ENCODE measurements at regions of chr2 and their contacts with region 1.

Region 1: GRCh38 chr2:113138428-113139322 is 11.3 kb downstream of the IL1RN start:
- H3K4me3 ChIP-seq: no peak overlapping the region
- H3K27ac ChIP-seq: no peak overlapping the region
- H3K4me1 ChIP-seq: no peaks in the 10 kb centered on the region
- CTCF ChIP-seq: peak; percentile 50

Region 2: GRCh38 chr2:112821142-112821541 is 317.5 kb before region 1 on chr2:
- CTCF ChIA-PET with region 1: no interaction called
- POLR2A ChIA-PET with region 1: no interaction called
- H3K4me3 ChIP-seq: no peak overlapping the region
- H3K27ac ChIP-seq: no peak overlapping the region
- H3K4me1 ChIP-seq: no peaks in the 10 kb centered on the region; the same call in 1 of the 2 replicates
- CTCF ChIP-seq: no peak

Region 3: DNA sequence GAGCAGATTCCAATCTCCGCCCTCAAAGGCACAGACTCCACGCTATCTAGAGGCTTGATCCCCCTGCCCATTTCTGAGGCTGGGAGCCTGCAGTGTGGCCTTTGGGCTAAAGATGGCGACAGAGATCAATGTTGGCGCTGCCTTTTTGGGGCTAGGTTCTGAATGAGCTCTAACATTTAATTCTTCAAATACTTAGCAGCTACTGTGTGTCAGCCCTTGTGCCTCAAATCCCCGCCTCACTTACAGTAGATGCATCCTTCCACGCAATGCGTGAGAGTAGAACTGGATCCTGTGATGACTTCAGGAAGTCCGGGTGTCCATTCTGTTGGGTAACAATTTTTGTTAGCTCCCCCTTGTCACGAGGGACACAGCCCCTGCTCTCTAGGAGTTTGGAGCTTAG is 58.5 kb before region 1 on chr2:
- CTCF ChIA-PET with region 1: interaction called, 25 read pairs
- POLR2A ChIA-PET with region 1: no interaction called
- H3K4me3 ChIP-seq: no peak overlapping the region
- H3K27ac ChIP-seq: no peak overlapping the region
- H3K4me1 ChIP-seq: no peaks in the 10 kb centered on the region
- CTCF ChIP-seq: no peak

Region 4: DNA sequence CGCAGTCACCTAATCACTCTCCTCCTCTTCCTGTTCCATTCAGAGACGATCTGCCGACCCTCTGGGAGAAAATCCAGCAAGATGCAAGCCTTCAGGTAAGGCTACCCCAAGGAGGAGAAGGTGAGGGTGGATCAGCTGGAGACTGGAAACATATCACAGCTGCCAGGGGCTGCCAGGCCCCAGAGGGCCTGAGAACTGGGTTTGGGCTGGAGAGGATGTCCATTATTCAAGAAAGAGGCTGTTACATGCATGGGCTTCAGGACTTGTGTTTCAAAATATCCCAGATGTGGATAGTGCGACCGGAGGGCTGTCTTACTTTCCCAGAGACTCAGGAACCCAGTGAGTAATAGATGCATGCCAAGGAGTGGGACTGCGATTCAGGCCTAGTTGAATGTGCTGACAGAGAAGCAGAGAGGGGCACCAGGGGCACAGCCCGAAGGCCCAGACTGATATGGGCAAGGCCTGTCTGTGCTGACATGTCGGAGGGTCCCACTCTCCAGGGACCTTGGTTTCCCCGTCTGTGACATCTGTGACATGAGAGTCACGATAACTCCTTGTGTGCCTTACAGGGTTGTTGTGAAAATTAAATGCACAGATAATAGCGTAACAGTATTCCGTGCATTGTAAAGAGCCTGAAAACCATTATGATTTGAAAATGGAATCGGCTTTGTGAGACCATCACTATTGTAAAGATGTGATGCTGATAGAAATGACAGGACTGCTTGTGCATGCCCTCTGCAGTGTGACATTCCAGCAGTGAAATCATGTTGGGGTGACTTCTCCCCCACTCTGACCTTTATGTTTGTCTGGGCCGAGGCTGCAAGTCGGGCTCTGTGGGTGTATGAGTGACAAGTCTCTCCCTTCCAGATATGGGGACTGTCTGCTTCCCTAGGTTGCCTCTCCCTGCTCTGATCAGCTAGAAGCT is 10.8 kb before region 1 on chr2:
- CTCF ChIA-PET with region 1: interaction called, 66 read pairs
- POLR2A ChIA-PET with region 1: no interaction called
- H3K4me3 ChIP-seq: no peak overlapping the region
- H3K27ac ChIP-seq: no peak overlapping the region
- H3K4me1 ChIP-seq: no peaks in the 10 kb centered on the region
- CTCF ChIP-seq: no peak

Region 5: DNA sequence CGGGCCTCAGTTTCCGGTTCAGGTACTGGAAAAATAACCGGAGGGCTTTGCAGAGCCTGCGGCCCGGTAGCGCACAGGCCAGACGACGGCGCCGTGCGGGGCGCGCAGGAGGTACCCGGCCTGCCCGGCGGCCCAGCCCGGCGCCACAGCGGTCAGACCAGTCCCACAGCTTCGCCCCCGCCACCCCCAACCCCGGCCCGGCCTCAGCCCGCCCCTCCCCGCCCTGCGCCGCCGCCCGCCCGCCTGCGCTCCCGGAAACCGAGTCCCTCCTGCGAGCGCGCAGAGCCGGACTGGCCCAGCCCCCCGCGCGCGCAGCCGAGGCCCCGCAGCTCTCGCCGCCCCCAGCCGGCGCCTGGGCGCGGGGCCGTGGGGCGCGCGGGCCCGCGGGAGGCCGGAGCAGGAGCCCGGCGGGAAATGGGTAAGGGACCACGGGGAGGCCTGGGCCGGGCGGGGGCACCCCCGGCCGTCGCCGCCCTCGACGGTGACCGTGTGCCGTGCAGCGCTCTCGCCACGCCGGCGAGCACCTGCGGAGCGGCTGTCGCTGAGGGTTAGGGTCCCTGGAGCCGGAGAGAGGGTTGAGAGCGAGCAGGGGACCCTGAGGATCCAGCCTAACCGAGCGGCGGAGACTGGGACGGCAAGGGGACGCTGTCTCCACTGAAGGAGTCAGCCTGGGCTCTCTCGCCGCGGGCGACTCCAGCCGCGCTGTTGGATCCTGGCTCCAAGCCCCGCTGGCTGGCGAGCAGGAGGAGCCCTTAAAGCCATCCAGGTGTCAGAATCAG is 18.6 kb after region 1 on chr2:
- CTCF ChIA-PET with region 1: interaction called, 19 read pairs
- POLR2A ChIA-PET with region 1: no interaction called
- H3K4me3 ChIP-seq: peak overlapping the region; percentile 20
- H3K27ac ChIP-seq: peak overlapping the region; percentile 69; the same call in 1 of the 2 replicates
- H3K4me1 ChIP-seq: no peaks in the 10 kb centered on the region; the same call in 1 of the 2 replicates
- CTCF ChIP-seq: peak; percentile 22; the same call in 1 of the 2 replicates

Region 6: GRCh38 chr2:113192438-113193100 is 53.9 kb after region 1 on chr2:
- CTCF ChIA-PET with region 1: interaction called, 177 read pairs
- POLR2A ChIA-PET with region 1: no interaction called
- H3K4me3 ChIP-seq: no peak overlapping the region
- H3K27ac ChIP-seq: no peak overlapping the region
- H3K4me1 ChIP-seq: no peaks in the 10 kb centered on the region
- CTCF ChIP-seq: peak; percentile 56

Region 7: GRCh38 chr2:113248997-113249770 is 110.5 kb after region 1 on chr2:
- CTCF ChIA-PET with region 1: interaction called, 13 read pairs
- POLR2A ChIA-PET with region 1: no interaction called
- H3K4me3 ChIP-seq: no peak overlapping the region
- H3K27ac ChIP-seq: no peak overlapping the region
- H3K4me1 ChIP-seq: no peaks in the 10 kb centered on the region
- CTCF ChIP-seq: peak; percentile 65

Region 8: DNA sequence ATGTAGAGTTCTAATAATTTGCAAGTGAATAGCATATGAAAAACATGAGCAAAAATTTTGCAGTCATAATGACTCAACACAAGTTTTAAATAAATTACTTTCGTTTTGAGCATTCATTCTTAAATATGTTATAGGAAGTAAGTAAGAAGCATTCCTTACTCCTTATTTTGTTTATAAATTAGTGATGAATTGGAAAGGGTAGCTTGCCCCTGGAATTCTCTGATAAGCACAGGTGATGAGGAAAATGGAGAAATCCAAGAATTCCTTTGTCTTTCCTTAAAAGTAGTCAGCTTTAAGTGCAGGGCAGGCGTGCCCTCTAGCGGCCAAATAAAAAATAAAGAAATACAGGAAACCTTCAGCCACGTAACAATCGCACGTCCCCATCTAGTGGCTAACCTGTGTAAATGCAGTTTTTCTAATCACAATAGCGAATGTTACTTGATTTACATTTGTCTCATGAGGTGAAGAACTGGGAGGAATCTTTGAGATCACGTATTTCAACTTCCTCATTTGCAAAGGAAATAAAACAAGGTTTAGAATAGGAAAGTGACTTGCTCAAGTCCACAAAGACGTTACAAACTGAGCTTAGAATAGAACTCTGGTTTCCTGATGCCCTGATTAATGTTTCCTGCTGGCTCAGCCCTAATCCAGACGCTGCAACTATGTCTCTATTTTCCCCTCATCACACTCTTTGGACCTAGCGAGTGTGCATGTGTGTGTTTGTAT is 251.6 kb after region 1 on chr2:
- CTCF ChIA-PET with region 1: interaction called, 77 read pairs
- POLR2A ChIA-PET with region 1: no interaction called
- H3K4me3 ChIP-seq: no peak overlapping the region
- H3K27ac ChIP-seq: no peak overlapping the region
- H3K4me1 ChIP-seq: no peaks in the 10 kb centered on the region
- CTCF ChIP-seq: peak; percentile 75

Measured in HEK293 (cell line).